T-cell (primary cell): ENCODE measurements at regions of chr4 and their contacts with region 1.

Region 1: DNA sequence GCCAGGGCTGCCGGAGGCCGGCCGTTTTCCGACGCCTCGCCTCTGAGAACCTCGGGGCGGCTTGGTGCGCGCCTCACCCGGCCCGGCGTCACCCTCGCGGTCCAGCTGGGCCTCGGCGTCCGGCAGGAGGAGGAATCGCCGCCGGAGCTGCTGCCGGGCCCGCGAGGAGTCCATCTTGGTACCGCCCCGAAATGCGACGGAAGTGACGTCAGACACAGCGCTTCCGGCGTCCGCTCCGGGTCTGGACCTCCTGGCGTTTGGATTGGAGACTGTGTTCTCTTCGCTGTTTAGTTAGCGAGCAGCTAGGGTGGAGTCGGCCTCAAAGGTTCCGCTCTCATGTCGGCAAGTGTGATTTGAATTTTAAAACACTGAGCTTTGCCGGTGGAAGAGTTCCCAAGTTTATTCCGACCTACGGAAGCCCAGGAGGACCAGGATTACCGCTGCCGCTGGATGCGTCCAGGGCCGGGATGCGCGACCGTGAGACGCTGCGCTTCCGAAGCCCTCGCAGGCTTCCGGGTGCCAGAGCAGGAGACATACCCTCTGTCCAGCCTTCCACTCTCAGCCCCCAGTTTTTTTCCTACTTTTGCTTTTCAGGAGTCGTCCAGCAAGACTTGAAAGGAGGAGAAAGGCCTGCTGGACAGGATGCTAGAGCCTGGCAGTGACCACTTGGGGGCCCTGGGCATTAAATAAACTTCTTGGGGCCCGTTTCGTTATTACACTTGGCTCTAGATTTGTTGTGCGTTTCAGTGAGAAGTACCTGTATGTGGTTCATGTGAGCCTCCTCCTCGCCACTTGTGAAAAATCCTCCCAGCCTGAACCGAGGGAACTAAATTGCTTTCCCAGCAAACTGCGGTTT is at the start of gene TMEM128:
- DNase-seq: peak; percentile 80 to 96 (median 90)
- ATAC-seq: peak; percentile 94 to 98 (median 96)
- H3K4me3 ChIP-seq: peak within 1 kb of the TSS; percentile 94 to 97
- H3K4me3 Mint-ChIP-seq: peak within 1 kb of the TSS; percentile 94 to 97 (median 96)
- H3K27ac ChIP-seq: peak within 1 kb of the TSS; percentile 95
- H3K27ac Mint-ChIP-seq: peak within 1 kb of the TSS; percentile 97
- H3K4me1 ChIP-seq: peaks cover 6 to 13% of the 10 kb centered on the region in 2 experiments
- H3K4me1 Mint-ChIP-seq: peaks cover 35 to 40% (median 40%) of the 10 kb centered on the region in 3 donors
- H3K27me3 ChIP-seq: no peaks in the 10 kb centered on the region
- H3K27me3 Mint-ChIP-seq: no peaks in the 10 kb centered on the region
- total RNA-seq, gene TMEM128: 9.9 to 22.8 (median 16.7) TPM

Region 2: DNA sequence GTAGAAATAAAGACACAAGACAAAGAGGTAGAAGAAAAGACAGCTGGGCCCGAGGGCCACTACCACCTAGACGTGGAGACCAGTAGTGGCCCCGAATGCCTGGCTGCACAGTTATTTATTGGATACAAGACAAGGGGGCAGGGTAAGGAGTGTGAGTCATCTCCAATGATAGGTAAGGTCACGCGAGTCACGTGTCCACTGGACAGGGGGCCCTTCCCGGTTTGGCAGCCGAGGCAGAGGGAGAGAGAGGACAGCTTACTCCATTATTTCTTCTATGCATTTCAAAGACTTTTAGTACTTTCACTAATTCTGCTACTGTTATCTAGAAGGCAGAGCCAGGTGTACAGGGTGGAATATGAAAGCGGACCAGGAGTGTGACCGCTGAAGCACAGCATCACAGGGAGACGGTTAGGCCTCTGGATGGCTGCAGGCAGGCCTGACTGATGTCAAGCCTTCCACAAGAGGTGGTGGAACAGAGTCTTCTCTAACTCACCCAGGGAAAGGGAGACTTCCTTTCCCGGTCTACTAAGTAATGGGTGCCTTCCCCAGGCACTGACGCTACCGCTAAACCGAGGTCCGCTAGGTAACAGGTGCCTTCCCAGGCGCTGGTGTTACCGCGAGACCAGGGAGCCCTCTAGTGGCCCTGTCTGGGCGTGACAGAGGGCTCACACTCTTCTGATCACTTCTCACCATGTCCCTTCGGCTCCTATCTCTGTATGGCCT is 86.7 kb after region 1 on chr4:
- CTCF ChIA-PET with region 1: interaction called, 9 to 14 read pairs
- POLR2A ChIA-PET with region 1: interaction called in 1 of 2 experiments, 3 read pairs
- DNase-seq: peak; percentile 50 to 83 (median 68)
- ATAC-seq: peak; percentile 84 to 97 (median 94)
- H3K4me3 ChIP-seq: no peak overlapping the region
- H3K4me3 Mint-ChIP-seq: no peak overlapping the region
- H3K27ac ChIP-seq: no peak overlapping the region
- H3K27ac Mint-ChIP-seq: no peak overlapping the region
- H3K4me1 ChIP-seq: peaks cover 0 to 6% of the 10 kb centered on the region in 2 experiments
- H3K4me1 Mint-ChIP-seq: peaks cover 8 to 13% (median 8%) of the 10 kb centered on the region in 3 donors
- H3K27me3 ChIP-seq: no peaks in the 10 kb centered on the region
- H3K27me3 Mint-ChIP-seq: no peaks in the 10 kb centered on the region

Region 3: DNA sequence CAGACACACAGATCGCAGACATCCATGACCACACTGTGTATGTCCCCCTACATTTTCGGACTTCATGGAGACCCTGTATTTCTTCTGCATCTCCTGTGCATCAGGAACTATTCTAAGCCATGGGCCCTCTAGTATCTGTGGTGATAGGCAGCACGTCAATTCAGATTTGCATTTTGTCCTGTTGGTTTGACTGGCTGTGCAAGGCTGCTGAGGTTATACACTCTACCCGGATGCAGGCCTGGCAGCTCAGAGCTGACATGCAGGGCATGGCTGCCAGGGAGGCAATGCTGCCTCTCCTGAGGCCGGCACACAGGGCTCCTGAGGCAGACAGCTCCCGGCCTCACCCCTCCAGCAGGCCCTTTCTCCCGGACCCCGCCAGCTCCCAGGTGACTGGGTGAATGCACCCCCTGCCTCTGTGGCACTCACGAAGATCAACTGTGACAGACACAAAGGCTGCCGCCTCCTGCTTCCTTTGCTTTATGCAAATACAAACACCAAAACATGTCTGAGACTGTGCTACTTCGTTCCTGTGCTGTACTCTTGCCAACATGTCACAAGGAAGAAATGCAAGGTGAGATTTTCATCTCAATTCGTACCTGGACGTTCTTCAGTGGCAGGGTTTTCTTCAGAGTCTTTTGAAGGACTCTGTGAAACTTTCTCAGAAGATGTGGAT is 189.7 kb after region 1 on chr4:
- CTCF ChIA-PET with region 1: interaction called, 5 to 10 read pairs
- POLR2A ChIA-PET with region 1: interaction called in 1 of 2 experiments, 4 read pairs
- DNase-seq: no peak
- ATAC-seq: no peak
- H3K4me3 ChIP-seq: no peak overlapping the region
- H3K4me3 Mint-ChIP-seq: no peak overlapping the region
- H3K27ac ChIP-seq: no peak overlapping the region
- H3K27ac Mint-ChIP-seq: no peak overlapping the region
- H3K4me1 ChIP-seq: no peaks in the 10 kb centered on the region
- H3K4me1 Mint-ChIP-seq: no peaks in the 10 kb centered on the region
- H3K27me3 ChIP-seq: no peaks in the 10 kb centered on the region
- H3K27me3 Mint-ChIP-seq: no peaks in the 10 kb centered on the region